Dendritic cell treated with granulocyte-macrophage colony-stimulating factor and Interleukin-4, amounts not matched to agents 40 ng/mL and 50 ng/mL, for 4 days (primary cell): ENCODE measurements at regions of chr2 and their contacts with region 1.

Region 1: DNA sequence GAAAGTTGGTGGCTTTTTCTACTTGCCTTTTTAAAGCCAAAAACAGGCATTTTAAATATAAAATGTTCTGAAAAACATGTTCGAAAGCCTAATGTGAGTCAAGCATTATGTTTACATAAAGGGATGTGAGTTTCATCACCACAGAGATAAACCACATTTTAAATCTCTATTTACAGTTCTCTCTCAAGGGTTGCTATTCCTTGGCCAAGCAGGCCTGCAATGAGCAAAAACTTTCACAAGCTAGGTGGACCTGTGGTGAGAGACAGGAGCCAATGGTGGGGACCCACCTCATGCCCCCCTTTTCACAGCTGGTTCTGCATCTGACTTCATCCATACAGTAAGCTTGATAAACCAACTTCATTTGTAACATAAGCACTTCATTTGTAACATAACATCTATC is 65.1 kb downstream of the CUL3 start:
- H3K4me3 Mint-ChIP-seq: no peak overlapping the region
- H3K27ac Mint-ChIP-seq: no peak overlapping the region
- H3K4me1 Mint-ChIP-seq: peaks cover 37% of the 10 kb centered on the region
- H3K27me3 Mint-ChIP-seq: no peaks in the 10 kb centered on the region

Region 2: DNA sequence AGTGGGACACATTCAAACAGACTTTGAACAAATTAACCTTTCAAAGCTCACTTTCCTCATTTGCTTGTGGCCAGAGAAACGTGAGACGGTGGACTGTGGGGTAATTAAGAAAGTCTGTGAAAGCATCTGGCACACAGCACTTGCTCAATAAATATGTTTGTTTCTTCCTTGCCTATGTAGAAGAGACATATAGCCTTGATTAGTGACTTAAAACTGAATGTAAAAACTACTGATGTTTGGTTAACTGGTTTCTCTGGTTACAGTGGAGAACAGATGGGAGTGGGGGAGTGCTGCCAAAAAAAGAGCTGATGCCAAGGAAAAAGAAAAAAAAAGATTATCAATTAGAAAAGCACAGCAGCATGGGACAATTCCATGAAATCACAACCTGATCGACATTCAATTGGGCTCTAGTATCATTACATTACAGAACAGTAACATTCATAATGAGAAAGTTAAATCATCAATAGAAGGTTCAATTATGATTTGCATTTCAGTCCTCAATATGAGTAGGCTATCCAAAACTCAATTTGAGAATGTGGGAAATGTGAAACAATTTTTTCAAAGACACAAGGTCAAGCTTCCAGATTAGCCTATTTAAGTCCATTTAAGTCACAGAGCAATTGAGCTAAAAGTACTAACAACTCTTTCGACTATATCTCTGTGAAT is 50.4 kb after region 1 on chr2:
- intact Hi-C with region 1: loop called (anchors 5 kb)
- H3K4me3 Mint-ChIP-seq: no peak overlapping the region
- H3K27ac Mint-ChIP-seq: no peak overlapping the region
- H3K4me1 Mint-ChIP-seq: peaks cover 63% of the 10 kb centered on the region
- H3K27me3 Mint-ChIP-seq: no peaks in the 10 kb centered on the region

Region 3: DNA sequence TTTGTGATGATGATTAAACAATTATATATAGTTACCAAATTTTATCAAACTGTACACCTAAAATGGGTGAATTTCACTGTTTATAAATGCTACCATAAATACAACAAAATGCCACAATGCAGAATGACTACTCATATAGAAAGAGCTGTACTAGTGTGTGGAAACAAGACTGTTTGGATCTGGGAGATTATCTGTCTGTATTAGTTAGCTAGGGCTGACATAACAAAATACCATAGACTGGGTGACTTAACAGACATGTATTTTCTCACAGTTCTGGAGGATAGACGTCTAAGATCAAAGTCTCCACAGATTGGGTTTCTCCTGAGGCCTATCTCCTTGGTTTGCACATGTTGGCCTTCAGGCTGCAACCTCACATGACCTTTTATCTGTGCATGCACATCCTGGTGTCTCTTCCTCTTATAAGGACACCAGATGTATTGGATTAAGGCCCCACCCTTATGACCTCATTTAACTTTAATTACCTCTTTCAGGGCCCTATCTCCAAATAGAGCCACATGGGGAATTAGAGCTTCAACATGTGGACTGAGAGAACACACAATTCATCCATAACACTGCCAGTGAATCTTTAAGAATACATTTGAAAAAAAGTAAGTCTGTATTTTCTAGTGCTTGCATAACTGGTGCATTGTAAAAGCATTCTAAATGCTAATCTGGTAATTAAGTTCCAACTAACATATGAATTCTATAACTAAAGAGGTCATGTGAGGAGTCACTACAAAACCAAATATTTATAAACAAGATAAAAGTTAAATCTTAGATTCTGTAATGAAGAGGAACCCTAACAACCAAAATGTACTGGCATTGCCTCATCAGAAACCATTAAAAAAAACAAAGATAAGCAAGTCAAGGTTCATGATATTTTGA is 1579.0 kb after region 1 on chr2:
- intact Hi-C with region 1: no loop called
- H3K4me3 Mint-ChIP-seq: no peak overlapping the region
- H3K27ac Mint-ChIP-seq: no peak overlapping the region
- H3K4me1 Mint-ChIP-seq: no peaks in the 10 kb centered on the region
- H3K27me3 Mint-ChIP-seq: no peaks in the 10 kb centered on the region